Calu3 (cell line): ENCODE measurements at regions of chr2 and their contacts with region 1.

Region 1: DNA sequence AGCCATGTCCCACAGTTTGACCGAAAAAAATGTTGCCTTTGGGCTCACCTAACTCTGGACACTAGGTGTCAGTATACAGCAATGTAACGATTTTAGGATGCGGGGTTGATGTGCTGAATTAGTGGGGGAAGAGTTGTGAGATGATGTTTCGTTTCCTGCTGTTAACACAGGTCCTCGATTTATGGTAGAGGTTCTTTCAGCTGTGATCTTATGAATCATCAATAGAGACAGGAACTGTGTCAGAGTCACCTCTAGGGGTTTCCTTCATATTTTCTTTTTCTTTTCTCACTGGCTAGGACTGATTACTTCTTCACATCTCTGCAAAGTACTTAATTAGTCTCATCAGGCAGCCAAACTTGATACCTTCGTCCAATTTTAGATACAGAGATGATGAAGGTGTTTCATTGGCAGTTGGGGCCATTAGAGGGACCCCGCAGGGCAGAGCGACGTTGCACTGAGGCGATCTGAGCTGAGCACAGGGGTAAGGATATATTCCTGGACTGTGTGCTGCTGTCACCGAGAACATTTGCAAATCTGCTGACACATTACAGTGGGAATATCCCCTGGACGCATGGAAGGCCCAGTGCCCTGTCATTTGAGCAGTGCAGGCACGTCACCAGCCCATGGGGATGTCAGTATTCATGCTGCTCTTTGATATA is 10.2 kb upstream of the MMADHC start:
- DNase-seq: peak; percentile 66
- H3K4me3 Mint-ChIP-seq: no peak overlapping the region
- H3K27ac Mint-ChIP-seq: no peak overlapping the region
- H3K4me1 Mint-ChIP-seq: peaks cover 37% of the 10 kb centered on the region
- H3K27me3 Mint-ChIP-seq: no peaks in the 10 kb centered on the region
- CTCF ChIP-seq: peak; percentile 62

Region 2: DNA sequence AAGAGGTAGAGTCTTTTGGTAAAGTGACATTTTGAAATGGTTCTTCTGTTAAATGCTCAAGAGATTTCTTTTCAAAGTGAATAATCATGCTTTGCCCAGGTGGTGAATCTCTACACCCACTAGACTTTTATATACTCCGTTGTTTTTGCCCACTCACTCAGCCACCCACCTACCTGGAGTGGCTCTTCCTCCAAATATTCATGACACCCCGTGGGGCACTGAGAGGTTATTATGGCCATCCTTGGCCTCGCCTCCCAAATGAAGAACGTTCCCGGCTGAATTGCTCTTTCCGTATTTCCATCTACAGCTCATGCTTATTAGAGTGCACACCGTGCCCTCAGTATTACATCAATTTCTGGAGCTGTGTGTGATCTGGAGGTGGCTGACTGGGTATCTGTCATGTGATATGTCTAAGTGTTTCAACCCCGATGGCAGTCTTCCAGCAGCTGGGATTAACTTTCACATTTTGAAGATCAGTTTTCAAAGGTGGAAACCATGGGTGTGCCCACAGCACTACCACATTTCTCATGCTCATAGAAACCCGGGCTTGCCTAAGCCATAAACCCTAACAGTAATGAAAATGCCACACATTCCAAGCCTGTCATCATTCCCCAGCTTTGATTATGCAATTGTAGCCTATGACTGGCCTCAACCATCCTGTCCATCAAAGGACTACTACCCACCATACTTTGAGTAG is 396.4 kb after region 1 on chr2:
- CTCF ChIA-PET with region 1: interaction called, 3 read pairs
- intact Hi-C with region 1: loop called (anchors 5 kb)
- DNase-seq: peak; percentile 83
- H3K4me3 Mint-ChIP-seq: peak overlapping the region; percentile 20
- H3K27ac Mint-ChIP-seq: peak overlapping the region; percentile 79
- H3K4me1 Mint-ChIP-seq: peaks cover 49% of the 10 kb centered on the region
- H3K27me3 Mint-ChIP-seq: no peaks in the 10 kb centered on the region
- CTCF ChIP-seq: no peak

Region 3: DNA sequence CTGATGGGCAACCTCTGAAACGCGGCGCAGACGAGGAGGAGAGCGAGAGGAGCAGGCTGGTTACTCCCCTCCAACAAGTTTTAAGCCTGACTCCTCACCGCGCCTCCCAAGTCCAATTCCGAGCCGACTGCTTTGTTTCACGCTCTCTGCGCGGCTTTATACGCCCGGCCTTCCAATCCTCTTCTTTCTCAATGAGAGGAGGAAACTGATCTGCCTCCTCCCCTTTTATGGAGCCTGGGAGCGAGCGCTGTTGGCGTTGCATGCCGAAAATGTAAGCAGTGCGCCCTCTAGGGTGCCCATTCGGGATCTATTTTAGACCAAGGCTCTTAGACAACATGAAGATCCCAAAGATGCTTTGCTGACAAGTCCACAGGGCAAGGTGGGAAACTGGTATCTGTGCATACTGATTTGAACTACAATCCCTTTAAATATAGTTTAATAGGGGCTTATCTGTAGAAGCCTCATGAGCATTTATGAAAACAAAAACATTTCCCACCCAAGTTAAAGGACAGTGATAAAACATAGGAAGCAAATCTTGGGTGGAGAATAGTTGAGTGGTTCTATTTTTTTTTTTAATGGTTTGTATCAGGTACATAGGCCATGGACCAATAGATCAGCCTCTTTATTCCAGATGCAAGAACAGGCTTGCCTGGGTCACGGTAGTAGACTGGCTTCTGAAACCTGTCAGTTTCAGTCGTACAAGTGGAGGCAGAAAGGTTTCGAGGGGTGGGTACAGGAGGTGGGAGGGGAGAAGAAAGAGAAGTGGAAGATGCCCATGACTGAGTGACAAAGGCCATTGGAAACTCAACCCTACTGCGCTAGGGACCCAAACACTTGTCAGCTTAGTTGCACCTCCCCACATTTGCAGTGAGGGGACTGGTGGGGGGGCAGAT is 890.0 kb after region 1 on chr2 and contains the start of gene RND3:
- CTCF ChIA-PET with region 1: no interaction called
- intact Hi-C with region 1: loop called (anchors 2 kb)
- DNase-seq: peak; percentile 96
- H3K4me3 Mint-ChIP-seq: peak within 1 kb of the TSS; percentile 94
- H3K27ac Mint-ChIP-seq: peak within 1 kb of the TSS; percentile 99
- H3K4me1 Mint-ChIP-seq: peaks cover 18% of the 10 kb centered on the region
- H3K27me3 Mint-ChIP-seq: peaks cover 8% of the 10 kb centered on the region
- CTCF ChIP-seq: peak; percentile 67
- total RNA-seq, gene RND3: 118 and 143 TPM in 2 replicates

Region 4: GRCh38 chr2:151051574-151052220 is 1453.9 kb after region 1 on chr2:
- CTCF ChIA-PET with region 1: no interaction called
- intact Hi-C with region 1: loop called (anchors 2 kb)
- DNase-seq: peak; percentile 48
- H3K4me3 Mint-ChIP-seq: no peak overlapping the region
- H3K27ac Mint-ChIP-seq: no peak overlapping the region
- H3K4me1 Mint-ChIP-seq: peaks cover 35% of the 10 kb centered on the region
- H3K27me3 Mint-ChIP-seq: no peaks in the 10 kb centered on the region
- CTCF ChIP-seq: peak; percentile 38

Region 5: GRCh38 chr2:151238527-151239487 is 1641.0 kb after region 1 on chr2:
- CTCF ChIA-PET with region 1: interaction called, 5 read pairs
- intact Hi-C with region 1: loop called (anchors 5 kb)
- DNase-seq: peak; percentile 63
- H3K4me3 Mint-ChIP-seq: no peak overlapping the region
- H3K27ac Mint-ChIP-seq: no peak overlapping the region
- H3K4me1 Mint-ChIP-seq: no peaks in the 10 kb centered on the region
- H3K27me3 Mint-ChIP-seq: no peaks in the 10 kb centered on the region
- CTCF ChIP-seq: peak; percentile 70